ENCODE measurements at regions of chr1 and their contacts with region 1.

Region 1: GRCh38 chr1:45557422-45557944 is 6.9 kb downstream of the AKR1A1 start:
- DNase-seq: peak; percentile 71
- H3K27ac ChIP-seq: peak overlapping the region; percentile 85
- CTCF ChIP-seq: no peak

Region 2: DNA sequence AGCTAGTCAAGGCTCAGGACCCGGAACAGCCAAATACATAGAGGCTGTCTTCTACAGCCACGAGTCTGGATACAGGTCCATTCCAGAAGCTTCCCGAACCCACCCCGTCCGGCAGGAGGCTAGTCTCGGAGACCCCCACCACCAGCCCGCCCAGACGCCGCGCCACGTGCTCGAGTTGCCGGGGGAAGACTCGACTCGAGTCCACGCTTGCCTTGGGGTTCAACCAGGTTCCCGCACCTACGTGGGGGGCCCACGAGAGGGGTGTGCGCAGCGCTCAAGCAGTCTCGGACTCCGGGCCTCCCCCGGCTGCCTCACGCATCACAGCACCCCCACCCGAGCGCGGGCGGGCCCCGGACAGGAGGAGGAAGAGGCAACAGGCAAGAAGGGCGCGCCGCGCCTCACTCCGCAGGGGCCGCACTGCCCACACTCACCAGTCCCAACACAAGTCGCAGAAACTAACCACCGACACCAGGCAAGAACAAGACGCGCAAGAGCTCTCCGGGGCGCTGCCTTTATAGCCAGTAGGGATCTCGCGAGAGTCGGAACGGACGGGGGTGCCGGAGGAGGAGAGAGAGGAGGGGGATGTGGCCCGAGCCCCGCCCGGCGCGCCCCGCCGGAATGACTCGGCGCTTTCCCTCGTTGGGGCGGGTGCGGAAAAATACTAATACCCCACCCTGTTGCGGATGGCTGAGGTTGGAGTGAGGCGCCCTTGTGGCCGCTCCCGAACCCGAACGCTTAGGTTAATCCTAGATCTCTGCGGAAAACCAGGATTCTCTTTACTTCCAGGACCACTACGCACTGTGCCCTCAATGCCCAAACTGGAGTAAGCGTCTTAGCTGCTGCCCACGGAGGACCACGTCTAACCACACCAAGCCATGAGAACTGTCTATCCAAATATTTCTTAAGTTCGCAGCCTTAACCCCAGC is 35.8 kb before region 1 on chr1 and contains the start of gene PRDX1:
- CTCF ChIA-PET with region 1: no interaction called
- POLR2A ChIA-PET with region 1: interaction called, 17 read pairs
- DNase-seq: peak; percentile 98
- H3K27ac ChIP-seq: peak within 1 kb of the TSS; percentile 87
- CTCF ChIP-seq: no peak

Region 3: DNA sequence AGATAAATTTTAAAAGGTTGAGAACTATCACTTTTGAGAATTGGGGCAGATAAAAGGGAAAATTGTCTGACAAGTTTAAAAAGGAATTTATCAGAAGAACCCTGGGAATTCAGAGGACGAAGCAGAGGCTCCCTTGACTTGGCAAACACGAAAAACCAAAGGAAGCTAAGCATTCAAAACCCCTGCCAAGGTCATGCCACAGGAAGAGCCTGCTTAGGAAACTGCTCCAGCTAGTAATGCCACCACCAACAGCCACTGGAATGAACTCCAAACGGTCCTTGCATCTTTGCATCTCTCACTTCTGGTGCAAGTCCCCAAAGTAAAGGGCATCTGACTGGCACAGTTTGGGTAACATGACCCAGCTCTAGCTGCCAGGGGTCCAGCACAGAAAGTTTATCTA is 121.6 kb after region 1 on chr1:
- CTCF ChIA-PET with region 1: no interaction called
- POLR2A ChIA-PET with region 1: no interaction called
- DNase-seq: no peak
- H3K27ac ChIP-seq: no peak overlapping the region
- CTCF ChIP-seq: no peak

Measured in RWPE1 (cell line).